H1 (cell line): ENCODE measurements at regions of chr20 and their contacts with region 1.

Region 1: DNA sequence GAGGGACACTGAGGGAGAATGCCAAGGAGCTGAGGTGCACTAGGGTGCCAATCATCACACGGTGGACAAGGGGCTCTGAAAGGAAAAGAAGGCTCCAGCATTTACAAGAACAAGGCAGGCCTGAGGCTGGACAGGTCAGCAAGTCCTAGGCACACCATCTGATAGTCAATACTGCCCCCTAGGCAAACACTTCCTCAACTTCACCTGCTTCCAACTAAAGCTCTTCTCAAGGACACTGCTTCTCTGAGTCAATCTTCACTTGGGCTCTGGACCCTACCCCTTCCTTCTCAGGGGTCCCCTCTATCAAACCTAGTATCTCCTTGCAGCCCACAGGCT is 37.7 kb upstream of the SLC4A11 start:
- DNase-seq: no peak
- H3K4me3 ChIP-seq: no peak overlapping the region
- H3K27ac ChIP-seq: no peak overlapping the region
- H3K4me1 ChIP-seq: no peaks in the 10 kb centered on the region
- H3K27me3 ChIP-seq: no peaks in the 10 kb centered on the region
- CTCF ChIP-seq: peak; percentile 33 to 74 (median 67)
- EP300 ChIP-seq: no peak
- POLR2A ChIP-seq: no peak
- RAD21 ChIP-seq: peak; percentile 66 to 80

Region 2: GRCh38 chr20:3084283-3084985 is 192.2 kb before region 1 on chr20 and contains the start of gene AVP:
- CTCF ChIA-PET with region 1: no interaction called
- POLR2A ChIA-PET with region 1: no interaction called
- DNase-seq: no peak
- H3K4me3 ChIP-seq: peak within 1 kb of the TSS in 3 of 4 experiments; percentile 27 to 53 (median 38); a peak in 4 of 8 replicates
- H3K27ac ChIP-seq: no peak within 1 kb of the TSS
- H3K4me1 ChIP-seq: peaks cover 0 to 8% (median 6%) of the 10 kb centered on the region in 4 experiments; a peak in 5 of 7 replicates
- H3K27me3 ChIP-seq: peaks cover 27 to 43% (median 37%) of the 10 kb centered on the region in 4 experiments
- CTCF ChIP-seq: no peak
- EP300 ChIP-seq: no peak
- POLR2A ChIP-seq: no peak
- RAD21 ChIP-seq: no peak
- total RNA-seq, gene AVP: 0.77 TPM in 1 of 2 replicates, not detected in the other

Region 3: GRCh38 chr20:3146732-3147341 is 129.8 kb before region 1 on chr20:
- CTCF ChIA-PET with region 1: no interaction called
- POLR2A ChIA-PET with region 1: no interaction called
- DNase-seq: no peak
- H3K4me3 ChIP-seq: no peak overlapping the region
- H3K27ac ChIP-seq: no peak overlapping the region
- H3K4me1 ChIP-seq: no peaks in the 10 kb centered on the region
- H3K27me3 ChIP-seq: no peaks in the 10 kb centered on the region
- CTCF ChIP-seq: no peak
- EP300 ChIP-seq: no peak
- POLR2A ChIP-seq: no peak
- RAD21 ChIP-seq: no peak

Region 4: GRCh38 chr20:3262566-3262965 is 14.1 kb before region 1 on chr20:
- CTCF ChIA-PET with region 1: interaction called, 11 read pairs
- POLR2A ChIA-PET with region 1: no interaction called
- DNase-seq: no peak
- H3K4me3 ChIP-seq: no peak overlapping the region
- H3K27ac ChIP-seq: no peak overlapping the region
- H3K4me1 ChIP-seq: no peaks in the 10 kb centered on the region
- H3K27me3 ChIP-seq: no peaks in the 10 kb centered on the region
- CTCF ChIP-seq: no peak
- EP300 ChIP-seq: no peak
- POLR2A ChIP-seq: no peak
- RAD21 ChIP-seq: no peak